ENCODE measurements at regions of chr4 and their contacts with region 1.

Region 1: DNA sequence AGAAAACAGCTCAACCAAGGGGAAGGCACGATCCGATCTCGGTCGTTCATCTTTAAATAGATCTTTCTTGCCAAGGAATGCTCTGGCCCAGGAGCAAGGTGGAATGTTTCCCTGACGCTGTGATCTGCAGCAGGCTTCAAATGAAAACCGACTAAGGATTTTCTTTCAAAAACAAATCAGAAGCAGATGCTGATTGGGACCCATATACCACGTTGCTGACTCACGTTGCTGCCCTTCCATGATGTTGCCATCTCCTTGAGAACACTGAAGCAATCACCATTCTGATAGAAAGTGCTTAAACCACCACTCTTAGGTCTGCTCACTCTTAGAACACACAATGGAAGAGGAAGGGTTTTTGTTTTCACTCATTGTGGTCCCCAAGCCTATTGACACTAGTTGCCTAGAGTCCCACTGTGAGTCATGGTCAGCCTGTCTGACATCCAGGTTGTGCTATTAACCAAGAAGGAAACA is 26.1 kb downstream of the LAMTOR3 start:
- DNase-seq: no peak
- ATAC-seq: peak; percentile 26

Region 2: GRCh38 chr4:99190336-99190735 is 677.8 kb before region 1 on chr4:
- intact Hi-C with region 1: loop called (anchors 10 kb)
- DNase-seq: no peak
- ATAC-seq: no peak

Region 3: DNA sequence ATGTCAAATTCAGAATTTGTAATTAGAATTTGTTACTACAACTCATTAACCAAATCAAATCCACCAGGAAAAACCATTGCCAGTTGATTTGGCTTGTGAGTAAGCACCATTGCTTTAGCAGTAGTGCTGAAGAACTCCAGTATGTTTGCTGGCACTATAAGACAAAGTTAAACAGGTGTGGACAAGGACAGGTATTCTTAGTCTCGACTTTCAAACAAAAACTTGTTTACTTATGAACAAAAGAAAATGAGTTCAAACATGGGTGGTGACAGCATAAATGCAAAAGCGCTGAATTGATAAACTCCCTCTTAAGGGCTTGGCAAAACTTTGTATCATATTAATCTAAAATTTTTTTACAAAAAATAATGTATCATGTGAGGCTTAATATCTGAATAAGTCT is 431.7 kb before region 1 on chr4:
- intact Hi-C with region 1: no loop called
- DNase-seq: no peak
- ATAC-seq: no peak

Region 4: GRCh38 chr4:99696801-99697200 is 171.4 kb before region 1 on chr4:
- intact Hi-C with region 1: no loop called
- DNase-seq: no peak
- ATAC-seq: no peak

Region 5: GRCh38 chr4:99816545-99817308 is 51.4 kb before region 1 on chr4 and contains the start of gene DAPP1:
- intact Hi-C with region 1: loop called (anchors 10 kb)
- DNase-seq: peak; percentile 26
- ATAC-seq: peak; percentile 58
- total RNA-seq, gene DAPP1: 0.42 TPM